Activated T-helper 2 cell treated with anti-CD3 and anti-CD28 coated beads, Interferon-gamma antibody, Interleukin-2, Interleukin-4, amounts not matched to agents 10 μg/mL and 5 μg/mL and 100 μg/mL, durations not matched to agents 14 hours and 24 hours and 36 hours (primary cell): ENCODE measurements at regions of chr16 and their contacts with region 1.

Region 1: DNA sequence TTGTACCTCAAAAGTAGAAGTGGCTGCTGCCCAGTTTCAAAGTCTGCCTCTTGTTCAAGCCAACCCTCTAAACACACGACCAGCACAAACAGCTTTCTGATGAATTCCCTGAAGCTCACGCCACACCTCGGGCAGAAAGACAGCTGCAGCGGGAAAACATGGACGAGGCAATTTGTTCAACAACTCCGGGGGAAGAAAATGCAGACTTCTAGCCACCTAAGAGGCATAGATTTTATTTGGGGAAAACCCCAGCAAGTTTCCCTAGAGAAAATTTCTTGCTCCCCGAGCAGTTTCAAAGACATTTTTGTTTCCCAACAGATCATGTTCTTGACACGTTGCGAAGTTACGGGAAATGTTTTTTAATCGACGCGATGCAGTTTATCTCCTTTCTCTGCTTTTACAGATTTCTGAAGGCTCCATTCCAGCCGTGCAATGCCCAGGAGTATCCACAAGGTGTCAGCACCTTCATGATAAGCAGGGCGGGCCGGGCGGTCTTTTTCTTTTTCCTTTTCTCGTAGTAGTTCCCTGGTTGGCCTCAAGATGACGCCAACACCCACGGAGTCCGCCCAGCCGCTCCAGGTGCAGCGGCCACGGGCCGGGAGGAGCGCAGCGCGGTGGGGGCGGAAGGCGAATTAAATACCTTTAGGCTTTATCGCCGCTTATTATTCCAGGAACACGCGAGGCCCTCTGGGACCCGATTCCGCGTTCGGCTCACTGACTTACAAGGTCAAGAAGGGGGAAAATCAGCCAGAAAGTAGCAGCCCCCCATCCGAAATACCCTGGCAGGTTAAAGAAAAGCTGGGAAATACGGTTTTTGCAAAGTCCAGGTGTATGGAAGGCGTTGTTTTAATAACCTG is 2.9 kb upstream of the FOXC2 start:
- DNase-seq: peak; percentile 80
- H3K4me3 Mint-ChIP-seq: no peak overlapping the region
- H3K27ac Mint-ChIP-seq: peak overlapping the region; percentile 11
- H3K4me1 Mint-ChIP-seq: peaks cover 5% of the 10 kb centered on the region
- H3K27me3 Mint-ChIP-seq: peaks cover 45% of the 10 kb centered on the region

Region 2: DNA sequence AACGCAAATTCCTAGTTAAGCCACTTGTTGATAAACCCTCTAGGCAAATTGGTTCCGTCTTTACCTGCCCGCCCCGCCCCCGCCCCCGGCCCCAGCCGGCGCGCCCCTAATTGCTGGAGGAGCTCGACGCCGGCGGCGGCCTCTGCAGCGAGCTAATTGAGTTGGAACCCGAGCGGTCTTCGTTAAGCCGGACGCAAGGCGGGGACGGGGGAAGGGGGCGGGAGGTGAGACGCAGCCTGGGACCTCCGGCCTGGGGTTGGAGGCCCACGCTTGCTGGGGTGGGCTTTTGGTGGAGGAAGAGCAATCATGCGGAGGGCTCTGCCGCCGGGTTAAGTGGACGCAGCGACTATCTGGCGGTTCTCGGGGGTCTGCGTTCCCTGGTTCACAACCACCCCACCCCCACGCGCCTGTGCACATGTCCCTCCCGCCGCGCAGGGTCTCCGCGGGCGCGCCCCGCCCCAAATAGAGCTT is 66.1 kb before region 1 on chr16:
- intact Hi-C with region 1: loop called (anchors 2 kb)
- DNase-seq: no peak
- H3K4me3 Mint-ChIP-seq: no peak overlapping the region
- H3K27ac Mint-ChIP-seq: no peak overlapping the region
- H3K4me1 Mint-ChIP-seq: no peaks in the 10 kb centered on the region
- H3K27me3 Mint-ChIP-seq: peaks cover 76% of the 10 kb centered on the region

Region 3: DNA sequence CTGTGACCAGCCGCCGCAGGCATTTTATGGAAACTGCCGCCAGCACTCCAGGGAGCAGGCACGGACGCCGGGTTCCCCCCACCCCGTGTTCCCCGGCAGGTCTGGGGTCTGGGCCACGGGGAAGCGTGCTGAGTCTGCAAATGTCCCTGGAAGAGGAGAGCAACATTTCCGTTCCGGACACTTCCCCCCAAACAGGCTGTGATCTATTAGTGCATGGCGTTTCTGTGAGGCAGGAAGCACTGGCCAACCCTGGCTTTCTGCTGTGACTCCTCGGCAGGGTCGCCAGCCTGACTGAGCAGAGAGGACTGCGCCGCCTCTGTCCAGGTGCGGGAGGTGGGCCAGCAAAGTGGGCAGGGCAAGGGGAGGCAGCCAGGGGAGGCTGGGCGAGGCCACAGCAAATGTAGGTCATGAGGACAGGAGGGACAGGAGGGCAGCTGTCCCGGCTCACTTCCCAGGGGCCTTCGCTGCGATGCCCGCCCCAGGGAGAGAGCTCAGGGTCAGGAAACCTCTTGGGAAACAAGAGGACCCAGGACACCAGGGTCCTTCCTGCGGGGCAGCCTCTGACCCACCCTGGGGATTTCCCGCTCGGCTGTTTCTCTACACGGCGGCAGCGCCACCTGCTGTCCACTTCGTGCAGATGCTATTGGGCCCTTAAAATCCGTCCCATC is 43.9 kb before region 1 on chr16:
- intact Hi-C with region 1: loop called (anchors 2 kb)
- DNase-seq: peak; percentile 39
- H3K4me3 Mint-ChIP-seq: no peak overlapping the region
- H3K27ac Mint-ChIP-seq: no peak overlapping the region
- H3K4me1 Mint-ChIP-seq: no peaks in the 10 kb centered on the region
- H3K27me3 Mint-ChIP-seq: peaks cover 38% of the 10 kb centered on the region

Region 4: DNA sequence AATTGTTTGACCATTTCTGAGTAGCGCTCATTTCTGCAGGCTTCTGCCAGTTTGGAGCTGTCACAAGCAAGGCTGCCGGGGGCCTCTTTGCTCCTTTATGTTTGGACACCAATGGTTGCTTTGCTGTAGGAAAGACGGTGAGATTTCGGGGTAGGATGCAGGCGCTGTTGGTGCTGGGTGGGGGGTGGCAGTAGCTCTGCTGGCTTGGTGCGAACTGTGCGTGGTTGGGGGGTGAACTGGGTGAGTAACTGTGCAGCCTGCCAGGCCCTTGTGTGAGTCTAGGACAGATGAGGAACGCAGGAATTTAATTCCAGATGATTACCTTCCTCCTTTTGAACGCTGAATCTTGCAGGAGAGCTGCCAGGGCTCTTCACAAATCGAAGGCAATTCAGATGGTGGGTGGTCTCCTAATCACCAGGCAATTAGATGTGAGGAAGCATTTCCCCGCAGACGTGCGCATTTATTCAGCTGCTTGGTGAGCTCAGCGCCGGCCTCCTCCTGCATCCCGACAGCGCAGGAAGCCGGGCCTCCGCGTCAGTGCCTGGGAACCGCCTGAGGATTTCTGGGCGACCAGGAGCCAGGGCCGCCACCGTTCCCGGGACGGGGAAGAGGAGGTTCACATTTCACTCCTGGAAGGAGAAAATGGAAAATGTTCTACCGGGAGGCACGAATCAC is 169.0 kb after region 1 on chr16:
- intact Hi-C with region 1: loop called (anchors 10 kb)
- DNase-seq: no peak
- H3K4me3 Mint-ChIP-seq: no peak overlapping the region
- H3K27ac Mint-ChIP-seq: no peak overlapping the region
- H3K4me1 Mint-ChIP-seq: no peaks in the 10 kb centered on the region
- H3K27me3 Mint-ChIP-seq: peaks cover 63% of the 10 kb centered on the region

Region 5: GRCh38 chr16:86874141-86874540 is 310.4 kb after region 1 on chr16:
- intact Hi-C with region 1: loop called (anchors 2 kb)
- DNase-seq: peak; percentile 15
- H3K4me3 Mint-ChIP-seq: no peak overlapping the region
- H3K27ac Mint-ChIP-seq: no peak overlapping the region
- H3K4me1 Mint-ChIP-seq: no peaks in the 10 kb centered on the region
- H3K27me3 Mint-ChIP-seq: peaks cover 26% of the 10 kb centered on the region

Region 6: GRCh38 chr16:87062569-87063442 is 499.1 kb after region 1 on chr16:
- intact Hi-C with region 1: loop called (anchors 1 kb)
- DNase-seq: peak; percentile 29
- H3K4me3 Mint-ChIP-seq: no peak overlapping the region
- H3K27ac Mint-ChIP-seq: no peak overlapping the region
- H3K4me1 Mint-ChIP-seq: peaks cover 4% of the 10 kb centered on the region
- H3K27me3 Mint-ChIP-seq: peaks cover 41% of the 10 kb centered on the region

Region 7: DNA sequence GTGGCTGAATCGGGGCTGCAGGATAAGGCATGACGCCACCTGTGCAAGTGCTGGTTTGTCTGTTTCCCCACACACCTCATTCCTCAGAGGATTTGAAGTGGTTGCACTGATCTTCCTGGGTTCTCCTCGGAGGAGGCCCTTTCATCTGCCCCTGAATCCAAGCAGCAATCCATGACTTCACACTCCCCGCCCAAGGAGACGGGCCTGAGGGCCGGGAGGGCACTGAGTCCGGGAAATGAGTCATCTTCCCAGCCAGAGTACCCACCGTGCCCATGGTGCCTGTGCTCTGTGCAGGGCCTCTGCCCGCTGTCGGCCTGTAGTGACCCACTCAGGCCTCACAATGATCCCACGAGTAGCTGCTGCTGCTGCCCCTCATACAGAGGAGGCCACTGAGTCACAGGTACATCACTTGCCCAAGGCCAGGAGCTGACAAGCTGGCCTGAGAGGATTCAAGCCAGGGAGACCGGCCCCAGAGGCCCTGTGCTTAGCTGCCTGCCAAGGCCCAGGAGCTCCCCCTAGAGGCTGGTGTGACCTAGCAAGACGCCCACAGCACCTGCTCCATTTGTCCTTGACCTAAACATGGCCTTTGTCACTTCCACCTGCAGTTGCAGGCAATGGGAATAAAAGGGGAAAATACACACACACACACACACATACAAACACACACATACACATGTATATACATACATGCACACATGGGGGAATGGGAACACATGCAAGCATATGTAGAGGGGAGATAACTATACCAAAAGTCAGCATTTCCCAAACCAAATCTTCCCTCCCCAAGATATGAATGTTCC is 513.4 kb after region 1 on chr16:
- intact Hi-C with region 1: loop called (anchors 5 kb)
- DNase-seq: peak; percentile 16
- H3K4me3 Mint-ChIP-seq: no peak overlapping the region
- H3K27ac Mint-ChIP-seq: no peak overlapping the region
- H3K4me1 Mint-ChIP-seq: no peaks in the 10 kb centered on the region
- H3K27me3 Mint-ChIP-seq: no peaks in the 10 kb centered on the region